H1 (cell line): ENCODE measurements at regions of chr5 and their contacts with region 1.

Region 1: GRCh38 chr5:159951387-159951786 is 35.1 kb downstream of the ADRA1B start:
- DNase-seq: peak in 1 of 2 experiments; percentile 57
- H3K4me3 ChIP-seq: no peak overlapping the region
- H3K27ac ChIP-seq: no peak overlapping the region
- H3K4me1 ChIP-seq: no peaks in the 10 kb centered on the region
- H3K27me3 ChIP-seq: no peaks in the 10 kb centered on the region
- CTCF ChIP-seq: peak; percentile 59 to 78 (median 65)
- EP300 ChIP-seq: no peak
- POLR2A ChIP-seq: no peak
- RAD21 ChIP-seq: peak; percentile 57 to 70

Region 2: DNA sequence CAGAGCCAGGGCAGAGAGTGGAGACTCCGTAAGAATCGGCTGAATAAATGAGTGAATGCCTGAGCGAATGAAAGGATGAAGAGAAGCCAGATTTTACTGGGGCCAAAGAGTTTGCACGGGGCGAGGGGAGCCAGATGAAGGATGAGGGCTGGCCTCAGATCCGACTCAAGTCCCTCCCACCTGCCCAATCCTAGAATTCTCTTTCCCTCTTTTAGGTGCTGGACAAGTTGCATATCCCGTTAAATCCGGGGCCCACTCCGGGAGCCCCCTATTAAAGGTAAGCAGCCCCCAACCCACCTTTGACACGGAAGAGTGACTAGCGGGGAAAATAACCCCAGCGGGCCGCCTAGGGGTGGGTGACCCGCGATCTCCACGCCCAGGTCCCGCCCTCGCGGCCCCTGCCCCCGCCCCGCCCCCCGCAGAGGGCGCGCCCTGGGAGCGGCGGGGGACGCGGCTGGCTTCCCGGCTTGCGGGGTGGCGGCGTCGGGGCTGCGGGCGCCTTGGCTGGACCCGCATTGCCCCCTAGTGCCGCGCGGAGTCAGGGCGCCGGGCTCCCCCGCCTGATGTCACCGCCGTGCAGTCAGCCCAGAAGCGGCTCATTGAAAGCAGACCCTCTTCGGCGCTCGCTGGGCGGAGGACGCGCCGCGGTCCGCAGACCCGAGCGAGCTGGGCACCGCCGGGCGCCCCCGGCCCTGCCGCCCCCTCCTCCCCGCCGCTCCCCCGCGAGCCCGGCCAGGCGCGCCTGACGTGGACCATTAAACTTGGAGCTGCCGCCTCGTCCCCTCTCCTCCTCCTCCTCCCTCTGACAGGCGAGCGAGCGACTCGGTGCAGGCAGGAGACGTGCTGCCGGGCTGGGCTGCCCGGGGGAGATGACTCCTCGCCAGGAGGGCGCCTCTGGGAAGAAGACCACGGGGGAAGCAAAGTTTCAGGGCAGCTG is 35.2 kb before region 1 on chr5 and contains the start of gene ADRA1B:
- CTCF ChIA-PET with region 1: interaction called, 10 read pairs
- POLR2A ChIA-PET with region 1: no interaction called
- DNase-seq: peak; percentile 38 to 81
- H3K4me3 ChIP-seq: peak within 1 kb of the TSS; percentile 38 to 73 (median 58)
- H3K27ac ChIP-seq: no peak within 1 kb of the TSS
- H3K4me1 ChIP-seq: no peaks in the 10 kb centered on the region; a peak in 2 of 7 replicates
- H3K27me3 ChIP-seq: peaks cover 6 to 34% (median 25%) of the 10 kb centered on the region in 4 experiments
- CTCF ChIP-seq: peak; percentile 57 to 70 (median 67)
- EP300 ChIP-seq: no peak
- POLR2A ChIP-seq: no peak
- RAD21 ChIP-seq: peak; percentile 80 to 87
- total RNA-seq, gene ADRA1B: not detected in 2 replicates

Region 3: DNA sequence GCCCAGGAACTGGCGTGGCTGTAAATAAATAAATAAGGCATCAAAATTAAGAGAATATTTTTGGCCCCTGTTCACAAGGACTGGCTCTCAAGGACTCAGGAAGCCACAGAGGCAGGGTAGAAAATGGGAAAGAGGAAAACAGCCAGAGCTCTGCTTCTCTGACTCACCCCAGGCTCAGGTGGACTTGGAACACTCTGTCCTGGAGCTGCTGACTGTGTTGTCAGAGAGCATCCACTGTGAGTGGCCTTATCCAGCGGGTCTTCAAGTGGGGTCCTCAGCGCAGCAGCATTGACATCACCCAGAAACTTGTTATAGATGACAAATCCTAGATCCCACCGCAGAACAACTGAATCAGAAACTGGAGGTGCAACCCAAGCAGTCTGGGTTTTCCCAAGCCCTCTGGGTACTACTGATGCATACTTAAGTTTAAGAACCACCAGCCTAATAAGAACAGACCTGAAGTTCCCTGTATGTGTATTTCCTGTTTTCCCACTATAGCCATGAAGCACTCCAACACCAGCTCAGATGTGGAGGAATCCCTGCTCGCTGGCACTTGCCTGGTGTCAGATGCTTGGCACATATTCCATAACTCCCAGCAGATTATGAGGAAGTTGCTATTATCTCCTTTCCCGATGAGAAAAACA is 14.6 kb before region 1 on chr5:
- CTCF ChIA-PET with region 1: interaction called, 17 read pairs
- POLR2A ChIA-PET with region 1: no interaction called
- DNase-seq: peak in 1 of 2 experiments; percentile 33
- H3K4me3 ChIP-seq: no peak overlapping the region
- H3K27ac ChIP-seq: no peak overlapping the region
- H3K4me1 ChIP-seq: no peaks in the 10 kb centered on the region
- H3K27me3 ChIP-seq: no peaks in the 10 kb centered on the region
- CTCF ChIP-seq: no peak
- EP300 ChIP-seq: no peak
- POLR2A ChIP-seq: no peak
- RAD21 ChIP-seq: no peak

Region 4: DNA sequence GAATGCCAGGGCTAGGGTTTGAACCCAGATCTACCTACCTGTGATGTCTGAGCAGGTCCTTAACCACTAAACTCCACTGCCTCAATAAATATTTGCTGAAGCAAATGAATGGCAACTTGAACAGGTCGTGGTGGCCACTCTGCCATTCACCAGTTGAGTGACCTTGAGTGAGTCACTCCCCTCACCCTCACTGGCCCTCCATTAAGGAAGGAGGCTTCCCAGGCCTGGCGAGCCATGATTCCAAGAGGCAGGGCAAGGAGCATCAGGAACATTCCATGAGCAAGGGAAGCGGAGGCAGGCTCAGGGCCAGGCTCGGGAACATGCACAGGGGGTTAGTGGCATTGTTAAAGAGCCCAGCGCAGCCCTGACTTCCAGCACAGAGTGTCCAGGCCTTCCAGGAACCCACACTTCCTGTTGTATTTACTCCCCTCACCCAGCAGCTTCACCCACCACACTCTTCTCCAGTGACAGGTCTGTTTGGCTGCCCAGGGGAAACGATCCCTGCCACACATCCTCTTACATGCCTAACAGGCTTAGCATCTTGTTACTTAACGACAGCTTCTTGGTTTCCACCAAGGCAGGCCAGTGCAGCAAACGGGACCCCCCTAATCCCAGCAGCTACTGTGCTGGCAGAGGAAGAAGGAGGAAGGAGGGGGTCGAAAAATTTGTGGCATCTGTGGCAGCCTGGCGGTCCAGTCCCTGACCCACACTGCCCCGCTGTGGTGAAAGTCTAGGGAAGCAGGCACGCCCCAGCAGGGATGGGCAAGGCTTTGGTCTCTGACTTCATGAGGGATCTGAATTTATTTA is 13.8 kb after region 1 on chr5:
- CTCF ChIA-PET with region 1: interaction called, 46 read pairs
- POLR2A ChIA-PET with region 1: no interaction called
- DNase-seq: peak in 1 of 2 experiments; percentile 85
- H3K4me3 ChIP-seq: no peak overlapping the region
- H3K27ac ChIP-seq: no peak overlapping the region
- H3K4me1 ChIP-seq: no peaks in the 10 kb centered on the region
- H3K27me3 ChIP-seq: peaks cover under 1 to 2% (median under 1%) of the 10 kb centered on the region in 4 experiments; a peak in 4 of 7 replicates
- CTCF ChIP-seq: peak; percentile 73 to 89 (median 78)
- EP300 ChIP-seq: no peak
- POLR2A ChIP-seq: no peak
- RAD21 ChIP-seq: peak; percentile 88 to 92

Region 5: GRCh38 chr5:159975462-159976019 is 24.2 kb after region 1 on chr5:
- CTCF ChIA-PET with region 1: interaction called, 10 read pairs
- POLR2A ChIA-PET with region 1: no interaction called
- DNase-seq: no peak
- H3K4me3 ChIP-seq: no peak overlapping the region
- H3K27ac ChIP-seq: no peak overlapping the region
- H3K4me1 ChIP-seq: peaks cover 0 to 4% (median 2%) of the 10 kb centered on the region in 4 experiments; a peak in 2 of 7 replicates
- H3K27me3 ChIP-seq: peaks cover 23 to 38% (median 35%) of the 10 kb centered on the region in 4 experiments
- CTCF ChIP-seq: no peak
- EP300 ChIP-seq: no peak
- POLR2A ChIP-seq: no peak
- RAD21 ChIP-seq: peak in 1 of 2 experiments; percentile 30; a peak in 2 of 4 replicates

Region 6: GRCh38 chr5:160064995-160065630 is 113.7 kb after region 1 on chr5:
- CTCF ChIA-PET with region 1: no interaction called
- POLR2A ChIA-PET with region 1: no interaction called
- DNase-seq: no peak
- H3K4me3 ChIP-seq: no peak overlapping the region
- H3K27ac ChIP-seq: no peak overlapping the region
- H3K4me1 ChIP-seq: peaks cover 4 to 11% (median 5%) of the 10 kb centered on the region in 4 experiments; a peak in 5 of 7 replicates
- H3K27me3 ChIP-seq: no peaks in the 10 kb centered on the region
- CTCF ChIP-seq: no peak
- EP300 ChIP-seq: no peak
- POLR2A ChIP-seq: no peak
- RAD21 ChIP-seq: no peak